PC-3 (cell line): ENCODE measurements at regions of chr14 and their contacts with region 1.

Region 1: GRCh38 chr14:52552063-52552988 is at the starts of genes GPR137C and TXNDC16:
- DNase-seq: peak; percentile 100
- ATAC-seq: peak; percentile 91
- H3K4me3 ChIP-seq: peak within 1 kb of the TSS; percentile 87
- H3K27ac ChIP-seq: peak within 1 kb of the TSS; percentile 10; the same call in 1 of the 2 replicates
- H3K4me1 ChIP-seq: peaks cover 20% of the 10 kb centered on the region
- H3K27me3 ChIP-seq: no peaks in the 10 kb centered on the region
- CTCF ChIP-seq: no peak
- total RNA-seq, gene GPR137C: 0.63 and 0.91 TPM in 2 replicates
- total RNA-seq, gene TXNDC16: 3.9 and 4.0 TPM in 2 replicates

Region 2: GRCh38 chr14:52142504-52142903 is 409.8 kb before region 1 on chr14:
- CTCF ChIA-PET with region 1: no interaction called
- POLR2A ChIA-PET with region 1: no interaction called
- intact Hi-C with region 1: no loop called
- DNase-seq: no peak
- ATAC-seq: no peak
- H3K4me3 ChIP-seq: no peak overlapping the region
- H3K27ac ChIP-seq: no peak overlapping the region
- H3K4me1 ChIP-seq: no peaks in the 10 kb centered on the region
- H3K27me3 ChIP-seq: no peaks in the 10 kb centered on the region
- CTCF ChIP-seq: no peak

Region 3: DNA sequence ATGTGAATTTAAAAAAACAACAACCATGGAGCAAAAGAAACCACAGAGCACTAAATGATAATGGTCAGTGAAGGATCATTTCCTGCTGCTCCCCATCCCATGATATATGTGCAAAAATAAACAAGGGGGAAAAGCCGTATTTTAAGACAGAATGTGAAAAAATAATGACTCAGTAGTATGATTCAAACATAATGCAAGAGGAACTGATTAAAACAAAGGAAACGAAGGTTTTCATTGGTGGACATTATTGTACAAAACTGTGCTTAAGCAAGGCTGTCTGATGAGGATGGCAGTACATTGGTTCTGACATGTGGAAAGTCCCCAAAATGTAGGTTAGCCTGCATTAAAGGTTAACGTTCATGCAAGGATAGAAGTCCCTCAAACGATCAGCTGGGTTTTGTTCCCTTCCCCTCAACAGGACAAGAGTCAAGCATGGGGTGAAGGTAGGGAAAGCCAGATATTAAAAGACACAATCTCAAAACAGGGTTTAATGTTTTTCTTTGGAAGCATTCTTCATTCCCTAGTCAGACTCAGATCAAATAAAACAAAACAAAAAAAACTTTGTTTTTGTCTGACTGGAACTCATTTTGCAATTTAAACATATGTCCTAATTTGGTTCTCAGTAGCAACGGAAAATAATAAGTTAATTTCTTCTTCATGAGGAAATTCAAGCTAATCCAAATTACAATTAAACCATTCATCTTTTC is 311.1 kb before region 1 on chr14:
- CTCF ChIA-PET with region 1: no interaction called
- POLR2A ChIA-PET with region 1: no interaction called
- intact Hi-C with region 1: no loop called
- DNase-seq: peak; percentile 43
- ATAC-seq: peak; percentile 78
- H3K4me3 ChIP-seq: no peak overlapping the region
- H3K27ac ChIP-seq: 0 out of 2 replicates have a peak overlapping the region, but pooled peaks have one; percentile 13
- H3K4me1 ChIP-seq: peaks cover 14% of the 10 kb centered on the region
- H3K27me3 ChIP-seq: no peaks in the 10 kb centered on the region
- CTCF ChIP-seq: no peak

Region 4: GRCh38 chr14:52299692-52300278 is 252.5 kb before region 1 on chr14:
- CTCF ChIA-PET with region 1: no interaction called
- POLR2A ChIA-PET with region 1: no interaction called
- intact Hi-C with region 1: loop called (anchors 10 kb)
- DNase-seq: peak; percentile 80
- ATAC-seq: peak; percentile 72
- H3K4me3 ChIP-seq: no peak overlapping the region
- H3K27ac ChIP-seq: no peak overlapping the region
- H3K4me1 ChIP-seq: no peaks in the 10 kb centered on the region
- H3K27me3 ChIP-seq: no peaks in the 10 kb centered on the region
- CTCF ChIP-seq: peak; percentile 83

Region 5: GRCh38 chr14:52619692-52620091 is 67.4 kb after region 1 on chr14:
- CTCF ChIA-PET with region 1: no interaction called
- POLR2A ChIA-PET with region 1: interaction called, 12 read pairs
- intact Hi-C with region 1: no loop called
- DNase-seq: no peak
- ATAC-seq: no peak
- H3K4me3 ChIP-seq: no peak overlapping the region
- H3K27ac ChIP-seq: no peak overlapping the region
- H3K4me1 ChIP-seq: no peaks in the 10 kb centered on the region
- H3K27me3 ChIP-seq: no peaks in the 10 kb centered on the region
- CTCF ChIP-seq: no peak

Region 6: DNA sequence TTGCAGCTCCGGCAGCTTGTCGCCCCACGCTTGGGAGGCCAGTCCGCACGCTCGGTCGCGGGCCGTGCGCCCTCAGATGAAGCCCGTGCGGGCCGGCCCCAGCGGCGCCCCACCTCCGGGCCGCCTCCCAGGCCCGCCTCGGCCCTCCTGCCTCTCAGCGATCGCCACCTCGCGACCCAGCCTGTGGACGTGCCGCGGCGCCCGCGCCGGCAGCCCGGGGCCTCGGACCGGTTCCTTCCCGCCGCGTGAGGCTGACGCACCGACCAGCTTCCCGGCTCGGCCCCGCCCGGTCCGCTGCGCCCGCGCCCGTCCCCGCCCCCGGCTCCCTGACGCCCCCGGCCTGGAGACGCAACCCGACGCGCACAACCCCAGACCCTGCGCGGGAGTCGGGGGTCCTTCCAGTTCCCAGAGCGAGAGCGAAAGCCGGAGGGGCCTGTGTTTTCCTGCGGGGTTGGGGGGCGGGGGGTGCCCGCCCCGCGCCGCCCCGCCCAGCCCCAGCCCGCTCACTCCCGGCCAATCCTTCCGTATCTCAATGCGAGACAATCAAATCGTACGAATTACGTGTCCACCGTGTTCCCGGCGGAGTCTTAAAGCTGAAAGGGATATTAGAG is 143.3 kb after region 1 on chr14 and contains the start of gene ERO1A:
- CTCF ChIA-PET with region 1: no interaction called
- POLR2A ChIA-PET with region 1: interaction called, 3 read pairs
- intact Hi-C with region 1: loop called (anchors 1 kb)
- DNase-seq: peak; percentile 88
- ATAC-seq: peak; percentile 69
- H3K4me3 ChIP-seq: peak within 1 kb of the TSS; percentile 79
- H3K27ac ChIP-seq: peak within 1 kb of the TSS; percentile 87
- H3K4me1 ChIP-seq: peaks cover 52% of the 10 kb centered on the region
- H3K27me3 ChIP-seq: no peaks in the 10 kb centered on the region
- CTCF ChIP-seq: no peak
- total RNA-seq, gene ERO1A: 151 and 207 TPM in 2 replicates

Region 7: GRCh38 chr14:52791203-52792096 is 239.1 kb after region 1 on chr14 and contains the start of gene GNPNAT1:
- CTCF ChIA-PET with region 1: interaction called, 3 read pairs
- POLR2A ChIA-PET with region 1: no interaction called
- intact Hi-C with region 1: loop called (anchors 2 kb)
- DNase-seq: peak; percentile 97
- ATAC-seq: peak; percentile 90
- H3K4me3 ChIP-seq: peak within 1 kb of the TSS; percentile 78
- H3K27ac ChIP-seq: peak within 1 kb of the TSS; percentile 86
- H3K4me1 ChIP-seq: peaks cover 25% of the 10 kb centered on the region
- H3K27me3 ChIP-seq: no peaks in the 10 kb centered on the region
- CTCF ChIP-seq: no peak
- total RNA-seq, gene GNPNAT1: 38.2 and 44.5 TPM in 2 replicates